Activated T-helper 2 cell treated with anti-CD3 and anti-CD28 coated beads, Interferon-gamma antibody, Interleukin-2, Interleukin-4, amounts not matched to agents 10 μg/mL and 5 μg/mL and 100 μg/mL, durations not matched to agents 14 hours and 24 hours and 36 hours (primary cell): ENCODE measurements at regions of chr6 and their contacts with region 1.

Region 1: DNA sequence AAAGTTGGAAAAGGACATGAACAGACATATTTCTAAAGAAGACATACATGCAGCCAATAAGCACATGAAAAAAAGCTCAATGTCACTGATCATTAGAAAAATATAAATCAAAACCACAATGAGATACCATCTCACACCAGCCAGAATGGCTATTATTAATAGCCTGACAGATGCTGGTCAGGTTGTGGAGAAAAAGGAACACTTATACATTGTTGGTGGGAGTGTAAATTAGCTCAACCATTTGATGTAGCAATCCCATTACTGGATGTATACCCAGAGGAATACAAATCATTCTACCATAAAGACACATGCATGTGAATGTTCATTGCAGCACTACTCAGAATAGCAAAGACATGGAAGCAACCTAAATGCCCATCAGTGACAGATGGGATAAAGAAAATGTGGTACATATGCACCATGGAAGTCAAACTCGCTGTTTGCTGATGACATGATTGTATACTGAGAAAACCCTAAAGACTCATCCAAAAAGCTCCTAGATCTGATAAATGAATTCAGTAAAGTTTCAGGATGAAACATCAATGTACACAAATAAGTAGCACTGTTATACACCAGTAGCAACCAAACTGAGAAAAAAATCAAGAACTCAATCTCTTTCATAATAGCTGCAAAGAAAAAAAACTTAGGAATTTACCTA is 196.8 kb downstream of the ADGB start:
- DNase-seq: no peak
- H3K4me3 Mint-ChIP-seq: no peak overlapping the region
- H3K27ac Mint-ChIP-seq: peak overlapping the region; percentile 10
- H3K4me1 Mint-ChIP-seq: peaks cover 14% of the 10 kb centered on the region
- H3K27me3 Mint-ChIP-seq: no peaks in the 10 kb centered on the region

Region 2: GRCh38 chr6:146300521-146300920 is 495.1 kb before region 1 on chr6:
- intact Hi-C with region 1: no loop called
- DNase-seq: no peak
- H3K4me3 Mint-ChIP-seq: no peak overlapping the region
- H3K27ac Mint-ChIP-seq: no peak overlapping the region
- H3K4me1 Mint-ChIP-seq: no peaks in the 10 kb centered on the region
- H3K27me3 Mint-ChIP-seq: no peaks in the 10 kb centered on the region

Region 3: GRCh38 chr6:146829792-146830565 is 34.4 kb after region 1 on chr6:
- intact Hi-C with region 1: no loop called
- DNase-seq: no peak
- H3K4me3 Mint-ChIP-seq: no peak overlapping the region
- H3K27ac Mint-ChIP-seq: no peak overlapping the region
- H3K4me1 Mint-ChIP-seq: no peaks in the 10 kb centered on the region
- H3K27me3 Mint-ChIP-seq: no peaks in the 10 kb centered on the region

Region 4: DNA sequence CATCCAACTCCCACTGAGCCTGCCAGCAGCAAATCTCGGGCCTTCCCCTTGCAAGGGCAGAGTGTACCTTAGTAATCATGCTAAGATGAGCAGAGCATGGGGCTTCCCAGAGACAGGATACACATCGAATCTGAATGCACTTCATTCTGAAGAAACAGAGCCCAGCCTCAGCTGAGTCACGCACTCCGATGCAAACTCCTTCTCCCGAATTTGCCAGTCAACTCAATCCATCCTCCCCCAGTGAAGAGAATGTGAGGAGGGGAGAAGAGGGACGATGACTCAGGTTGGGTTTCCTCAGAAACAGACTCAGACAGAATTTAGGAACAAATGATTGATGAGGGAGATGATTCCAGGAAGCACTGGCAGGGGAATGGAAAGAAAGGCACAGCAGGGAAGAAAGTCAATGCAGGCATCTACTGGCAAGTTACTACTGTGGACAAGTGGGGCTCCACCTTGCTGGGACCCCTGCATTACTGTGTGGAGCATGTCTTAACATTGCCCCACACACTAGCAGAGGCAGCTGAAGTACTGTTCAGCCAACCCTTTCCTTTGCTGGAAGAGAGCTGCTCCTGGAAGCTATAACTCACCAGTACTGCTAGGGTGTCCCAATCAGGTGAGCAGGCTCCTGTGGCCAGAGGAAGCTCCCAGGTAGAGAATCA is 54.8 kb after region 1 on chr6:
- intact Hi-C with region 1: loop called (anchors 2 kb)
- DNase-seq: no peak
- H3K4me3 Mint-ChIP-seq: no peak overlapping the region
- H3K27ac Mint-ChIP-seq: peak overlapping the region; percentile 81
- H3K4me1 Mint-ChIP-seq: peaks cover 36% of the 10 kb centered on the region
- H3K27me3 Mint-ChIP-seq: no peaks in the 10 kb centered on the region

Region 5: DNA sequence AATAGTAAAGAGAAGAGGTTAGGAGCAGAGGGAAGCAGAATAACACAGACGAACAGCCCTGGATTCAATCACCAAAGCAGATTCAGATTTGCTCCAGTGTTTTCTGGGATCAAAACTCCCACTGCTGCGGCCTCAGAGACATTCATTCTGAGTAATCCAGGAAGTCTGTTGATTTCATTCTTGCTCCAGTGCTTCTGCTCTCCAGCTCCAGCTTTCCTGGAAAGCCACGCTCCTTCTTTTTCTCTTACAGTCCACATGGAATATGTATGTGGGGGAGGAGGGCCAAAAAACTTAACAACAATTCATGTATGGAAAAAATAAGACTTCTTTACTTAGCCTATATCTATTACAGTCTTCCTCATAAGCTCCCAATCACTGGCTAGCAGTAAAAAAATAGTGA is 1924.8 kb after region 1 on chr6:
- intact Hi-C with region 1: no loop called
- DNase-seq: no peak
- H3K4me3 Mint-ChIP-seq: no peak overlapping the region
- H3K27ac Mint-ChIP-seq: no peak overlapping the region
- H3K4me1 Mint-ChIP-seq: no peaks in the 10 kb centered on the region
- H3K27me3 Mint-ChIP-seq: peaks cover 32% of the 10 kb centered on the region